ENCODE measurements at regions of chr12 and their contacts with region 1.

Region 1: GRCh38 chr12:52192173-52192791 is 468 bp upstream of the KRT80 start:
- DNase-seq: peak; percentile 99
- ATAC-seq: peak; percentile 91 to 92
- H3K4me3 ChIP-seq: peak overlapping the region; percentile 64
- H3K27ac ChIP-seq: peak overlapping the region; percentile 96 to 100
- H3K4me1 ChIP-seq: peaks cover 76% of the 10 kb centered on the region
- CTCF ChIP-seq: no peak
- EP300 ChIP-seq: peak; percentile 80 to 86; a peak in 4 of 5 replicates
- POLR2A ChIP-seq: no peak
- RAD21 ChIP-seq: peak in 1 of 2 experiments; percentile 27; a peak in 2 of 5 replicates

Region 2: GRCh38 chr12:51593539-51593938 is 598.7 kb before region 1 on chr12:
- CTCF ChIA-PET with region 1: no interaction called
- POLR2A ChIA-PET with region 1: no interaction called
- DNase-seq: no peak
- ATAC-seq: no peak
- H3K4me3 ChIP-seq: no peak overlapping the region
- H3K27ac ChIP-seq: no peak overlapping the region
- H3K4me1 ChIP-seq: peaks cover 11% of the 10 kb centered on the region; the same call in 2 of the 3 replicates
- CTCF ChIP-seq: no peak
- EP300 ChIP-seq: no peak
- POLR2A ChIP-seq: no peak
- RAD21 ChIP-seq: no peak

Region 3: DNA sequence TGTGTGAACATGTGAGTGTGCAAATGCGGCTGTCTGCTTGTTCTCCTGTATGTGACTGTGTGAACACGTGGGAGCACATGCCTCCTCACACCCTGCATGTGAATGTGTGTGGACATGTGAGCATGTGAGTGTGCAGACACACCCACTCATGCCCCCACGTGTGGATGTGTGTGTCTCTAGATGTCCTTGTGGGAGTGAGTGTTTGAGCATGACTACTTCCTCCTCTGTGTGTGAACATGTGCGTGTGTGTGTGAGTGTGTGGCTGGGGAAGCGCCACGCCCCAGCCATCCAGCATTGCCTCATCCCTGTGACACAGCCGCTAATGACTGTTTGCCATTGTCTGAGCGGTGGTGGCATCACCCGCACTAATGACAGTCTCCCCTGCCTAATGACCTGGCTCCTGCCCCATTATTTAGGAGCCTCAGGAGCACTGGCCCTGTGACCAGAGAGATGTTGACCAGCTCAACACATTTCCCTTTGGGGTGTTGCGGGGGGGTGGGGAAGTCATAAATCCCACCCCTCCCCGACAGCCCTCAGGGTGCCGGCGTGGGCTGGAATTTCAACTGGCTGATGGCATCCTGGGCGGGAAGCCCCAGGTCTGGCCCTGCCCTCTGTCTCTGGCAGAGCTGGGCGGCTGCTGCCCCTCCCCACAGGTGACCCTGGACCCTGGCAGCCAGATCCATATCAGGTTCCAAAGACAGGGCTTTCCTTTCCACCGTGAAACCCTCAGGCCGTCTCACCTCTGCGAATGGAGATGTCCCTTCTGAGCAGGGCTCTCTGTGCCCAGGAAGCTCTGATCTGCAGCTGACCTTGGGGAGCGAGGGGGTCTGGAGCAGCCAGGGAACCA is 11.0 kb after region 1 on chr12:
- CTCF ChIA-PET with region 1: no interaction called
- POLR2A ChIA-PET with region 1: interaction called, 14 read pairs
- DNase-seq: peak; percentile 66 to 96
- ATAC-seq: peak; percentile 67 to 75
- H3K4me3 ChIP-seq: no peak overlapping the region
- H3K27ac ChIP-seq: peak overlapping the region; percentile 87 to 96
- H3K4me1 ChIP-seq: peaks cover 90% of the 10 kb centered on the region
- CTCF ChIP-seq: no peak
- EP300 ChIP-seq: peak; percentile 73; a peak in 3 of 5 replicates
- POLR2A ChIP-seq: no peak
- RAD21 ChIP-seq: no peak

Region 4: DNA sequence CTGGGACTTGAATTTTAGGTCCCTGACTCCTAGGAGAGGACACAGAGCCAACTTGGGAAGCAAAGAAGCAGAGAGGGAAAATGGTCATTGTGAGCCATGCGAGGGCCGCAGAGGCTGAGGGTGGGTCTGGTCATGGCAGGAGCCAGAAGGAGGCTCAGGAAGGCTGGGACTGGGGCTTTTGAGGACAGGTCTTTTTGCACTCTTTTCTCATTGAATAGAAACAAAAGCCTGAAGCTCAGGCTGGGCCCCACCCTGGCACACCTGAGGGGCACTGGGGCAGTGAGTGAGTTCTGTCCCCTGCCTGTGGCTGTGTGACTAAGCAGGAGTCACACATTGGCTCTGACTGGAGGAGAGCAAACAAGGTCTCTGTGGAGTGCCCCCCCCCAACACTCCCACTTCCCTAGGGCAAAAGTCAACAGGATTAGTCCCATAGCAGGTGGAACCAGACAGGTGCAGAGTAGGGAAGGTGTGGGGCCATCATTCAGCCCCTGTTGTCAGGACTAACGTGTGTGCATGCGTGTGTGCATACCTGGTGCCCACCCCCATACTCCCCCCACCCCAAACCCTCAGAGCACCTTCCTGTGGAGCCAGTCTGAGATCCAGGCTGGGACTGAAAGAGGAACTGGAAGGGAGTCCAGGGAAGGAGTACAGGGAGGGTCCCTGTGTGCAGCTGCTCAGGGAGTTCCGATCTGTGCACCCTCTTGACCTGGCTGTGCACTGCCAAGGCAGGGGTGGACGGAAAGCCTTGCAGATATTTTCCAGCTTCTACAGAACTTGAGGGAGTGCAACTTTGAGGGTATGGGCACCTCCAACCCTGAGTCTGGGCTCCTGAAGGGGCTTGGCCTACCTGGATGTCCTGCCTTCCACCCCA is 43.8 kb after region 1 on chr12:
- CTCF ChIA-PET with region 1: interaction called, 5 read pairs
- POLR2A ChIA-PET with region 1: interaction called, 11 read pairs
- DNase-seq: peak in 1 of 2 experiments; percentile 24
- ATAC-seq: no peak
- H3K4me3 ChIP-seq: peak overlapping the region; percentile 93
- H3K27ac ChIP-seq: peak overlapping the region; percentile 97
- H3K4me1 ChIP-seq: peaks cover 73% of the 10 kb centered on the region
- CTCF ChIP-seq: no peak
- EP300 ChIP-seq: no peak
- POLR2A ChIP-seq: no peak
- RAD21 ChIP-seq: no peak

Region 5: GRCh38 chr12:52243856-52244614 is 51.8 kb after region 1 on chr12:
- CTCF ChIA-PET with region 1: interaction called, 13 read pairs
- POLR2A ChIA-PET with region 1: interaction called, 11 read pairs
- DNase-seq: peak; percentile 92 to 93
- ATAC-seq: peak; percentile 22 to 31
- H3K4me3 ChIP-seq: peak overlapping the region; percentile 24; the same call in 1 of the 3 replicates
- H3K27ac ChIP-seq: peak overlapping the region; percentile 92 to 97
- H3K4me1 ChIP-seq: peaks cover 100% of the 10 kb centered on the region
- CTCF ChIP-seq: no peak
- EP300 ChIP-seq: peak; percentile 55 to 80; a peak in 3 of 5 replicates
- POLR2A ChIP-seq: no peak
- RAD21 ChIP-seq: no peak; a peak in 2 of 5 replicates